ENCODE measurements at regions of chrX and their contacts with region 1.

Region 1: DNA sequence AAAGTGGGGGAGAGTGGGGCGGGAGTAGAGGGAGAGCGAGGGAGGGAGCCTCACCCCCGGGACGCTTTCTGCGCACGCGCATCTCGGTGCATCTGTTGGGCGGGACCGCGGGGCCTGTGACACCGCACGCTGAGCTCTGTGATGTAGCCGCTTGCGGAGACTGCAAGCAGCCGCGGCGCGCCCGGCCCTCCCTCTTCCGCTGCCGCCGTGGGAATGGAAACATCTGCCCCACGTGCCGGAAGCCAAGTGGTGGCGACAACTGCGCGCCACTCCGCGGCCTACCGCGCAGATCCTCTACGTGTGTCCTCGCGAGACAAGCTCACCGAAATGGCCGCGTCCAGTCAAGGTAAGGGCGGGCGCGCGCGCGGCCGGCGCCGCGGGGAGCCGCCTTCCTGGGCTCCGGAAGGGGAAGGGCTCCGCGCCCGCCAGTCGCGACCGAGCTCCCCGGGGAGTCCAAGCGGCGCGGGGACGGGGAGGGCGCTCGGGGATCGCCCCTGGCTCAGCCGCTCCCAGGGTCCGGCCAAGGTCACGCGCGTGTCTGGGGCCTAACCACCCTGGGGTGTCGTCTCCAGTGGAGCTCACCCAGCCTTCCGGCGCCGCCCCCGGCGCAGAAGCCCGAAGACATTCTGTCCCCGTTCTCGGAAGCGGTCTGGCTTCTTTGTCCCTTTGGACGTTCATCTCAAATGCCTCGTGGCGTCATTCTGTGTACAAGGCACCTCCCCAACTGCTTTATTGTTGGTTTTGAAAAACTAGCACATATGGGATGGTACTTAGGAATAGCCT is at the start of gene FUNDC2:
- DNase-seq: peak; percentile 83
- ATAC-seq: peak; percentile 86
- H3K4me3 Mint-ChIP-seq: peak within 1 kb of the TSS; percentile 87
- H3K27ac Mint-ChIP-seq: peak within 1 kb of the TSS; percentile 93
- H3K4me1 Mint-ChIP-seq: peaks cover 21% of the 10 kb centered on the region
- H3K27me3 Mint-ChIP-seq: no peaks in the 10 kb centered on the region
- CTCF ChIP-seq: no peak
- total RNA-seq, gene FUNDC2: 62.0 and 67.6 TPM in 2 replicates

Region 2: GRCh38 chrX:154827194-154828015 is 199.5 kb before region 1 on chrX:
- CTCF ChIA-PET with region 1: no interaction called
- POLR2A ChIA-PET with region 1: no interaction called
- intact Hi-C with region 1: loop called (anchors 5 kb)
- DNase-seq: no peak
- ATAC-seq: peak; percentile 92
- H3K4me3 Mint-ChIP-seq: peak overlapping the region; percentile 15
- H3K27ac Mint-ChIP-seq: peak overlapping the region; percentile 92
- H3K4me1 Mint-ChIP-seq: peaks cover 31% of the 10 kb centered on the region
- H3K27me3 Mint-ChIP-seq: no peaks in the 10 kb centered on the region
- CTCF ChIP-seq: no peak

Region 3: DNA sequence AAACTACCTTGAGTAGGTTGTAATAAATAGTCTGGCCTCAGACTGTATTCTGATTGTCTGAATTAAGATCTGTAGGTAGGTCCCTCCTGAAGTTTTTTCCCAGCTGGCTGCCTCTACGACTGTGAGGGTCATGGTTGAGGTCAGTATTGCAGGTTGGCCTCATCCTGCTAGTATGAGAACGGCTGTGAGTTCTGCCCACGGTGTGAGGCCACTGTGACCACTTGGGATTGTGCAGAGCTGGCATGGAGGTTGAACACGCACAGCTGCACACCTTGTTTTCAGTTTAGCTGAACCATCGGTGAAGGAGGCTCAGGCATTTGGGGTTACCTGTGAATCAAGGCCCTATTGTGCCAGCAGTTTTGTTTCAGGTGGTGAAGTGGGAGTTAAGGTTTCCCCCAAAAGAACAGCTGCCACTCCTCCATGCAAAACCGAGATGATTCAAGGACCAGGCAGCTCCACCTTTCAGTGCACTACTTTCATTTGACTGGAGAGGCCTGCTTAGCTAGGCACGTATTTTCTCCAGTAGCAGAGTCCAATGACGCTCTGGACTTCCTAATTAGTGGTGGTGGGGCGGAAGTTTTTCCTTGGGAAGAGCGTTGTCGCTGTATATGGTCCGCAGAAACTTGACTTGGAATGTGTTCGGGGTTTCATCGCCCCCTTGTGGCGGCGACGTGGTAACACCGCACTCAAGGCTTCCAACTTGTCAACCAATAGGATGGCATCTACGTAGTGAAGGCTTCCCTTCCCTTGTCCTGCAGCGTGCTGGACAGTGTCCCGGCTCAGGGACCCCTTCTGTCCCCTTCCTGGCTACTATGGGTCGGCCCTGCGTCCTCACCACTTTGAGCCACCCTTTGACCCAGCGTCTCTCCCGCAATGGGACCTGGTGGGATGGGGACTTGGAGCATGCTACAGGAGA is 30.2 kb after region 1 on chrX:
- CTCF ChIA-PET with region 1: interaction called, 6 read pairs
- POLR2A ChIA-PET with region 1: interaction called, 10 read pairs
- intact Hi-C with region 1: no loop called
- DNase-seq: peak; percentile 26
- ATAC-seq: peak; percentile 84
- H3K4me3 Mint-ChIP-seq: peak overlapping the region; percentile 48
- H3K27ac Mint-ChIP-seq: peak overlapping the region; percentile 35
- H3K4me1 Mint-ChIP-seq: peaks cover 13% of the 10 kb centered on the region
- H3K27me3 Mint-ChIP-seq: no peaks in the 10 kb centered on the region
- CTCF ChIP-seq: no peak

Region 4: DNA sequence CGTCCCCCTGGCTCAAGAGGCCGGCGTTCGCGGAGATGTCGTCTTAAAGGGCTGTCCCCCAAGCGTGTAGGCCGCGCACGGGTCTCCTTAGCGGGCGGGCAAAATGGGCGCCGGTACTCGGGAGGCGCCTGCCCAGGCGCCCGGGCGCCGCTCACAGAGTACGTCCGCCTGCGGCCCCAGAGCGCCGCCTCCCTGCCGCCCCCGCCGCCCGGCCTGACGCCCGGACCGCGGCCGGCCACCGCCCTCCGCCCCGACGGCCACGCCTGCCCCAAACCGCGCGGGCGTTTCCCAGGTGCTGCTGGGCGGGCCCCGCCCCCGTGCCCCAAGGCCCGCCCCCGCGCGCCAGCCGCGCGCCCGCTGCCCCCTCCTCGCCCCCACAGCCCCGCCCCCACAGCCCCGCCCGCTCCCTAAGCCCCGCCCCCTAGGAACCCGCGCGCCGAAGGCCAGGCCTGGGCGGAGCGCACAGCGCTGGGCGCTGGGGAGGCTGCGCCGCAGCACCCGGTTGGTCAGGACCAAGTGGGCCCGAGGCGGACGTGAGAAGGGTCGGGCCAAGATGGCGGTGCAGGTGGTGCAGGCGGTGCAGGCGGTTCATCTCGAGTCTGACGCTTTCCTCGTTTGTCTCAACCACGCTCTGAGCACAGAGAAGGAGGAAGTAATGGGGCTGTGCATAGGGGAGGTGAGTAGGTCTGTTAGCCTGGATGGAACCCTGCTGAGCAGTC is 44.2 kb after region 1 on chrX and contains the starts of genes BRCC3, CMC4 and MTCP1:
- CTCF ChIA-PET with region 1: interaction called, 3 read pairs
- POLR2A ChIA-PET with region 1: interaction called, 14 read pairs
- intact Hi-C with region 1: loop called (anchors 1 kb)
- DNase-seq: peak; percentile 74
- ATAC-seq: peak; percentile 83
- H3K4me3 Mint-ChIP-seq: peak within 1 kb of the TSS; percentile 90
- H3K27ac Mint-ChIP-seq: peak within 1 kb of the TSS; percentile 92
- H3K4me1 Mint-ChIP-seq: peaks cover 45% of the 10 kb centered on the region
- H3K27me3 Mint-ChIP-seq: no peaks in the 10 kb centered on the region
- CTCF ChIP-seq: no peak
- total RNA-seq, gene BRCC3: 20.1 and 21.1 TPM in 2 replicates
- total RNA-seq, gene CMC4: 4.7 and 5.3 TPM in 2 replicates
- total RNA-seq, gene MTCP1: 19.5 and 21.2 TPM in 2 replicates

Region 5: GRCh38 chrX:155216179-155216939 is 189.4 kb after region 1 on chrX and contains the start of gene VBP1:
- CTCF ChIA-PET with region 1: no interaction called
- POLR2A ChIA-PET with region 1: interaction called, 5 read pairs
- intact Hi-C with region 1: loop called (anchors 1 kb)
- DNase-seq: peak; percentile 66
- ATAC-seq: peak; percentile 98
- H3K4me3 Mint-ChIP-seq: peak within 1 kb of the TSS; percentile 90
- H3K27ac Mint-ChIP-seq: peak within 1 kb of the TSS; percentile 91
- H3K4me1 Mint-ChIP-seq: peaks cover 18% of the 10 kb centered on the region
- H3K27me3 Mint-ChIP-seq: no peaks in the 10 kb centered on the region
- CTCF ChIP-seq: no peak
- total RNA-seq, gene VBP1: 40.6 and 43.9 TPM in 2 replicates

Region 6: DNA sequence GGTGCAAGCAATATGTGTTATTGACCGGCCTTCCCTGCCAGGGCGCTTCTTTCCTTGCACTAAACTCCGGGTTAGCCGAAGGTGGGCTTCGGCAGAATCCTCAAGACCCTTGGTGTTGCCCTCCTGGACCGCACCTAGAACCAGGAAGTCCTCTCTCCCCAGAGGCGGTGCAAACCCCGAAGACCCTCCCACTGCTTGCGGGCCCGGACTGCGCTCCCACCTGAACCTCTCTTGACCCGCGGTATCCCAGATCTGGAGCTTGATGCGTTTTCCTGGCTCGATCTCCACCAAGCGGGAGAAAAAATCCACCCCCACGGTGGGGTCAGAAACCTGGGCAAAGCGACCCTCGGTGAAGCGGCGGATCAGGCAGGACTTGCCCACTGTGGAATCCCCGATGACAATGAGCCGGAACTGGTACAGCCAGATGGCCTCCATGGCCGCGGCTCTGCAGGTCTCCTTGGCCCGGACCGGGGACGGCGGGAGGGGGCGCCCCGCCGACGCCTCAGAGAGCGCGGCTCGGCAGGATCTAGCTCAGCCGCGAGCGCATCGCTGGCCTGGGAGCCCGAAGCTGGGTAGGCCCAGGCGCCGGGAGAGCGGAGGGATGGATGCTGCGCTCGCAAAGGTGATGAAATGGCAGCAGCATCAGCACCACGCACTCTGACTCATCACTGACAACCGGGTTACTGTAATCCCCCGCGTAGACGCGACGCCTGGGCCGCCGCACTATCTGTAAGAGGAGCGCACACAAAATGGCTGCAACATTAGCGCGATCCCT is 237.1 kb after region 1 on chrX and contains the start of gene RAB39B:
- CTCF ChIA-PET with region 1: no interaction called
- POLR2A ChIA-PET with region 1: no interaction called
- intact Hi-C with region 1: loop called (anchors 5 kb)
- DNase-seq: peak; percentile 53
- ATAC-seq: peak; percentile 92
- H3K4me3 Mint-ChIP-seq: peak within 1 kb of the TSS; percentile 90
- H3K27ac Mint-ChIP-seq: peak within 1 kb of the TSS; percentile 90
- H3K4me1 Mint-ChIP-seq: peaks cover 22% of the 10 kb centered on the region
- H3K27me3 Mint-ChIP-seq: no peaks in the 10 kb centered on the region
- CTCF ChIP-seq: no peak
- total RNA-seq, gene RAB39B: 7.9 and 8.1 TPM in 2 replicates

Region 7: DNA sequence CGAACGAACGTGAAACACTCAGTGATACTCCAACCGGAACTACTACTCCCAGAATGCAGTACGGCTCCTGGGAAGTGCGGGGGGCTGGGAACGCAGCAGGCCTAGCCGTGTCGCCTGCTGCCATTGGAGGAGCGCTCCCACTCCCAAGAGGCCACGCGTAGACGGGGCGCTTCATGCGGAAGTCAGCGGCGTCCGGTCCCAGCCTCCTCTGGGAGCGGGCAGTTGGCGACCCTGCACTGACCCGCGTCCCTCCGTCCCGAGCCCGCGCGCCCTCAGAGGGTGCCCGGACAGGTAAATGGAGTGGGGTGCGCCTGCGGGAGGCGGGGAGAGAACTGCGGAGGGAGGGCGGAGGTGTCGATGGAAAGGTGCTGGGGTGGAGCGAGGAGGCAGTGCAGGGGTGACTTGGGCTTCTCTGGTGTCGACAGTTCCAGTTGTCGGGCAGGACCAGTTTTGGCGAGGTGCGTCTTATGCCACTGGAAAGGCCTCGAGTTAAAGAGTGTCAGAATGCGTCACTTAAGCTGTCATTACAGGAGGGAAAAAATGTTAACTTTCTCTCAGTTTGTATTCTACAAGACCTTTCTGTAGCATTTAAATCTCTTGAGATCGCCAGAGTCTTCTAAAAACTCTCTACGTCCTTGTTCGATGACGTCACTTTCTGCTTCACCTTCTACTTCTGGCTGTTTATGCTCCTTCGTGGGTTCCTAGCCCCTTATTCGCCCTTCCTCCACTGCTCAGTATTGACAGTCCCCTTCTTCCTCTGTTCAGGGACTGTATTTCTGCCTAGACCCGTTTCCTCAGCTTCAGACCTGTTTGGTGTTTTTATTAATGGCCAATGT is 854.5 kb after region 1 on chrX and contains the start of gene VAMP7:
- CTCF ChIA-PET with region 1: no interaction called
- POLR2A ChIA-PET with region 1: no interaction called
- intact Hi-C with region 1: loop called (anchors 1 kb)
- DNase-seq: peak; percentile 70
- ATAC-seq: peak; percentile 98
- H3K4me3 Mint-ChIP-seq: peak within 1 kb of the TSS; percentile 88
- H3K27ac Mint-ChIP-seq: peak within 1 kb of the TSS; percentile 82
- H3K4me1 Mint-ChIP-seq: peaks cover 31% of the 10 kb centered on the region
- H3K27me3 Mint-ChIP-seq: no peaks in the 10 kb centered on the region
- CTCF ChIP-seq: no peak
- total RNA-seq, gene VAMP7: 23.3 and 25.7 TPM in 2 replicates

Measured in activated B cell treated with CpG ODN at 0.5 μM for 24 hours (primary cell).